ENCODE measurements at regions of chr4 and their contacts with region 1.

Region 1: DNA sequence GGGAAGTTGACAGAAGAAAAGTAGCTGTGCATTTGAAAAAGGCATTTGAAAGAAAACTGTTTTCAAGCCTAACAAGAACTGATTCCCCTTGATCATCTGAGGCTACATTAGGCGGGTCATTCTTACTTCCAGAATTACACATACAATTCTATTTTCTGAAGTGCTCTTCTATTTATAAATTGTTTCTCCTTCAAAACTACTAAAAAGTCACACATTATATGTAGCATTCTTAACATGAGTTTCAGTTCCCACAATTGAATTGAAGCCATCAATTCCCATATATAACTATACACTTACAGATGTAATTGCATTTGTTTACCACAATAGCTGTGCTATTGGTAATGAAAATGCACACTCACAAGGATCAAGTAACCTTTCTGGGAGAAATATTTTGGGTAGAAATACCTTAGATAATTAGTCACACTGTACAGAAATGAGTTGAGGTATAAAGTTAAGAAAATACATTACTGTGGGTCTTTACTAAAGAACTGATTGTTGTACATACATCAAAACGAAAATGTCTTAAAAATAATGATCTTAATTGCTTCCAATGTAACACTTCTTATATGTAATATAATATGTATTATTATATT is 1688.0 kb upstream of the AGA start:
- DNase-seq: no peak
- ATAC-seq: no peak

Region 2: DNA sequence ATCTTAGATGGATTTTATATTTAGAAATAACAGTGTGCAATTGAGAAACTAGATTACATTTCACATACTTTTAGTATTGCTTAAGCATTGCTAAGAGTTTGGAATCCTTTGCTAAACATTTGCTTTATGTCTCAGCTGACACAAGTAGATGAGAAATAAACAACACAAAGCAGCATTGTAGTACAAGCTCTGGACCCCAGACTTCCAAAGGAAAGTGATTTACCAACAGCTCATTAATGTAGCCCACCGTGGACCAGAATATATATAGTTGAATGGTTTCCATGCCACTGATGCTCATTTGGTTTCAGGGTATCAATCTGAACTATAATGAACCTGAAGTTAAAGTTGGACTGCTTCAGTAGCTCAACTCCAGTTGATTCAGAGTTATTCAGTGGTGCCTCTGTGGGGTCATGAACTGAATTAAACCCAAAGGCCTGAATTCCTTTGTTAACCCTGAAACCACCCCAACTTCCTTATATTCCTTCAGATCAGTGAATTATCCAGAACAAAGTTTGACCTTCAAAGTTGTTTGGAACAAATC is 1952.6 kb before region 1 on chr4:
- intact Hi-C with region 1: loop called (anchors 10 kb)
- DNase-seq: no peak
- ATAC-seq: no peak

Region 3: DNA sequence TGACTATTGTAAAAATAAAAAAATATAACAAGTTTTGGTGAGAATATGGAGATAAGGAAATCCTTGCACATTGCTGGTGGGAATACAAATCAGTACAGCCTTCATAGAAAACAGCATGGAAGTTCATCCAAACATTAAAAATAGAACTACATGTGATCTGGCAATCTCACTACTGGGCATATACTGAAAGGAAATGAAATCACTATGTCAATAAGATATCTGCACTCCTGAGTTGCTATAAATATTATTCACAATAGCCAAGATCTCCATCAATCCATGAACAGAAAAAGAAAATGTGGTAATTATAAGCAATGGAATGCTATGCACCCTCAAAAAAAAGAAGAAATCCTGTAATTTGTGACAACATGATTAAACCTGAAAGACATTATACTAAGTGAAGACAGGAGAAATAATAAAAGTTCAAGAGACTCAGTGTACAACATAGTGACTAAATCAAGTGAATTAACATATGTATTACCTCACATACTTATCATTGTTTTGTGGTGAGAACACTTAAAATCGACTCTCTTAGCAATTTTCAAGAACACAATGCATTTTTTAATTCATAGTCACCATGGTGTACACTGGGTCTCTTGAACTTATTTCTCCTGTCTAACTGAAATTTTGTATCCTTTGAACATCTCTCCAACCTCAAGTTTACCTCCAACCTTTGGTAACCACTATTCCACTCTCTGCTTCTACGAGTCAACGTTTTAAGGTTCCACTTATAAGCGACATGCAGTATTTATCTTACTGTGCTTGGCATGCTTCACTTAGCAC is 15.7 kb after region 1 on chr4:
- intact Hi-C with region 1: loop called (anchors 1 kb)
- DNase-seq: no peak
- ATAC-seq: no peak